OCI-LY7 (cell line): ENCODE measurements at regions of chr7 and their contacts with region 1.

Region 1: DNA sequence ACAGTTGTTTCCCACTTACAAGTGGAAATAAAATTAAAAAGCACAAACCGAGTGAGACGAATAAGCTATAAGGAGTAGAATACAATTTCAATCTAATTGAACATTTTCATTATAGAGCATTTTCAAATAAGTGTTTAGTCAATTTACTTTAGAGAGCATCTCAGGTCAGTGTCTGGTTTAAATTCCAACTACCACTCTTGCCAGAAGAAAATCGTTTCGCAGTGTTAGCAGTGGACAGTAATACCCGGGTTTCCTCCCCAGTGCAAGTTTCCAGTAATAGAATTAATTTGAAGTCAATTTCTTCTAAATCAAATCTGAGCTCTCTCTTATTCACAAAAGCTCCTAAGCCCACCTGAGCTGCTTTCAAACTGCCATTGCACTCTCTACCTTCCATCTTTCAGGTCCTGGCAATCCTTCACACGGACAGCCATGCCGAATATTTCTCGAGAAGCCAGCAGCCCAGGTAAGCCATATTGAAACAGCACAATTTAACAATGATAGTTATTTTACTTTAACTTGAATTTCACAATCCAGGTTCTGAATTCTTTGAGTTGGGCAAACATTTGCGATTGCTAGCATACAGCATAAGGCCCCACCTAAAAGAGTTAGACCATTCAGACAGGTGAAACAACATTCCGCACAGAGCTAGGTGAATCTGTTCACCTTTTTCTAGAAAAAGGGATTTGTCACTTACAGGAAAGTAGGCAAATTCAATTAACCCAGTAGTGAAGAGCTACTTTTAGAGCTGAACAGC is 45.5 kb downstream of the CREB3L2 start:
- DNase-seq: no peak
- H3K4me3 ChIP-seq: no peak overlapping the region
- H3K27ac ChIP-seq: no peak overlapping the region
- H3K4me1 ChIP-seq: peaks cover 14% of the 10 kb centered on the region
- CTCF ChIP-seq: no peak

Region 2: GRCh38 chr7:137967143-137968018 is 11.0 kb after region 1 on chr7:
- CTCF ChIA-PET with region 1: interaction called, 3 read pairs
- POLR2A ChIA-PET with region 1: interaction called, 12 read pairs
- intact Hi-C with region 1: no loop called
- DNase-seq: no peak
- H3K4me3 ChIP-seq: no peak overlapping the region
- H3K27ac ChIP-seq: no peak overlapping the region
- H3K4me1 ChIP-seq: peaks cover 7% of the 10 kb centered on the region
- CTCF ChIP-seq: no peak